CD4-positive, alpha-beta memory T cell (primary cell): ENCODE measurements at regions of chr11 and their contacts with region 1.

Region 1: GRCh38 chr11:122754553-122755322 is 83.6 kb upstream of the CRTAM start:
- DNase-seq: peak in 4 of 5 donors; percentile 42 to 51 (median 44)
- H3K4me3 ChIP-seq: no peak overlapping the region
- H3K4me3 Mint-ChIP-seq: peak overlapping the region in 3 of 8 donors; percentile 30 to 49 (median 35)
- H3K27ac ChIP-seq: no peak overlapping the region
- H3K27ac Mint-ChIP-seq: peak overlapping the region in 5 of 7 donors; percentile 3 to 84 (median 54)
- H3K4me1 ChIP-seq: peaks cover 29% of the 10 kb centered on the region
- H3K4me1 Mint-ChIP-seq: peaks cover 31 to 58% (median 46%) of the 10 kb centered on the region in 4 donors
- H3K27me3 ChIP-seq: no peaks in the 10 kb centered on the region
- H3K27me3 Mint-ChIP-seq: no peaks in the 10 kb centered on the region

Region 2: DNA sequence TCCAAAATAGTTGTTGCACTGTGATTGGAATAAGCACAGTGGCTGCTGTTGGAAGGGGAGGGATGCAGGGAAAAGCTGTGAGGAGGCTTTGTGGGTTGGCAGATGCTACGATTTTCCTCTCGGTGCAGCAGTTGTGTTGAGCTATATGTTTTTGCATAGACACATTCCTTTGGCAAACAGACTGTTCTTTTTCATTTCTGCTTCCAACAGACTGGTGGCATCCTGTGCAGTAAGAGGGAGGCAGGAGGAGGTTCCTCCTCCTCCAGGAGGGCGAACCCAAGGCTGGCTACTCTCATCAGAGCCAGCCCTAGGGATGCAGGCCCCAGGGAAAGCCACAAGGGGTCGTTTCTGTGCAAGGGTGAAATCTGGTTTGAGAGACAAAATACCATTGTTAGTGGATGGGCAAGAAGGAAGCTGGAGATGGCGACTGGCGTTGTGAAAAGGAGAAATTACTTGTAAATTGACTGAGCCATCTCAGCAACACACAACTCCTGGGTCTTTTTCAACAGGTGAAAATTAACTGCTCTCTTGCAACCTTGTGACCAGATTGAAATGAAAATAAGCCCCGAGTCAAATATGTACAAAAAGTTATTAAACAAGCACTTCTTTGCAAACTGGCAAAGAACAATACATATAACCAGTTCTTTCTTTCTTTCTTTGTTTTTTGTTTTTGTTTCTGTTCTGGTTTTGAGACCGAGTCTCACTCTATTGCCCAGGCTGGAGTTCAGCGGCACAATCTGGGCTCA is 125.8 kb before region 1 on chr11:
- CTCF ChIA-PET with region 1: interaction called, 472 read pairs
- POLR2A ChIA-PET with region 1: interaction called, 20 read pairs
- intact Hi-C with region 1: loop called (anchors 1 kb)
- DNase-seq: peak; percentile 60 to 64 (median 62)
- H3K4me3 ChIP-seq: no peak overlapping the region
- H3K4me3 Mint-ChIP-seq: no peak overlapping the region
- H3K27ac ChIP-seq: no peak overlapping the region
- H3K27ac Mint-ChIP-seq: no peak overlapping the region
- H3K4me1 ChIP-seq: peaks cover 8% of the 10 kb centered on the region
- H3K4me1 Mint-ChIP-seq: peaks cover 0 to 10% (median 6%) of the 10 kb centered on the region in 4 donors
- H3K27me3 ChIP-seq: no peaks in the 10 kb centered on the region
- H3K27me3 Mint-ChIP-seq: peaks cover 0 to 1% of the 10 kb centered on the region in 2 donors

Region 3: GRCh38 chr11:122655527-122656072 is 99.1 kb before region 1 on chr11 and contains the start of gene UBASH3B:
- CTCF ChIA-PET with region 1: interaction called, 440 read pairs
- POLR2A ChIA-PET with region 1: interaction called, 121 read pairs
- intact Hi-C with region 1: loop called (anchors 1 kb)
- DNase-seq: peak; percentile 63 to 68 (median 66)
- H3K4me3 ChIP-seq: peak within 1 kb of the TSS; percentile 55 to 86
- H3K4me3 Mint-ChIP-seq: peak within 1 kb of the TSS; percentile 97 to 98 (median 98)
- H3K27ac ChIP-seq: peak within 1 kb of the TSS; percentile 66
- H3K27ac Mint-ChIP-seq: peak within 1 kb of the TSS; percentile 88 to 98 (median 95)
- H3K4me1 ChIP-seq: peaks cover 44% of the 10 kb centered on the region
- H3K4me1 Mint-ChIP-seq: peaks cover 20 to 53% (median 40%) of the 10 kb centered on the region in 4 donors
- H3K27me3 ChIP-seq: no peaks in the 10 kb centered on the region
- H3K27me3 Mint-ChIP-seq: no peaks in the 10 kb centered on the region
- total RNA-seq, gene UBASH3B: 26.6 to 30.9 TPM

Region 4: GRCh38 chr11:122697636-122698167 is 57.0 kb before region 1 on chr11:
- CTCF ChIA-PET with region 1: interaction called, 86 read pairs
- POLR2A ChIA-PET with region 1: interaction called, 131 read pairs
- intact Hi-C with region 1: loop called (anchors 1 kb)
- DNase-seq: peak; percentile 36 to 72 (median 53)
- H3K4me3 ChIP-seq: peak overlapping the region in 1 of 2 donors; percentile 39
- H3K4me3 Mint-ChIP-seq: peak overlapping the region; percentile 42 to 87 (median 76)
- H3K27ac ChIP-seq: peak overlapping the region; percentile 64
- H3K27ac Mint-ChIP-seq: peak overlapping the region; percentile 81 to 96 (median 93)
- H3K4me1 ChIP-seq: peaks cover 89% of the 10 kb centered on the region
- H3K4me1 Mint-ChIP-seq: peaks cover 66 to 93% (median 81%) of the 10 kb centered on the region in 4 donors
- H3K27me3 ChIP-seq: no peaks in the 10 kb centered on the region
- H3K27me3 Mint-ChIP-seq: no peaks in the 10 kb centered on the region

Region 5: DNA sequence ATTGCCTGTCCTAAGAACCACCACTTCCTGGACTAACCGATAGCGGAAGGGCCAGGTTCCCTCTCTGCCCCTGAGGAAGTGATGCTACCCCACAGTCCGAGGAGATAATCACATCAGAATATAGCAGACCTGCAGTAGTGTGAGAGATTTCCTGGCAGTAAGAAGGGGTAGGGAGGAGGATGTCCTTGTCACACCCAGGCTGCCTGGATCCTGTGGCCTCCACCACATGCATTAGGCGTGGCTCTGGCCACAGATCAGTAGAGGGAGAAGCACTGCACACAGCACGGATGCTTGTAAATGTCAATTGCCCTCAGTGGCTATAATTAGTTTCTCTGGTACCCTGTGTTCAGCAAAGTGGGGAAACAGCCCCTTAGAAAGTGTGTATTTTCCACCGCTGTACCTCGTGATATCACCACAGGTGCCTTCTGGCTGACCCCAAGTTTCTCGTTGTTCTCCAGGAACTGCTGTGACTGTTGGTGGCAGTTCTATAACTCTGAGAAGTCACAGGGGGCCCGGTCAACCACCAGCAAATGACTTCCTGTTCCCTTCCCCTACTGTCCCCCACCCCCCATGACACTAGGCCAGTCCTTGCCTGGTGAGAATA is 37.4 kb before region 1 on chr11:
- CTCF ChIA-PET with region 1: interaction called, 32 read pairs
- POLR2A ChIA-PET with region 1: interaction called, 3 read pairs
- intact Hi-C with region 1: loop called (anchors 5 kb)
- DNase-seq: peak in 2 of 5 donors; percentile 8 to 19
- H3K4me3 ChIP-seq: no peak overlapping the region
- H3K4me3 Mint-ChIP-seq: peak overlapping the region in 5 of 8 donors; percentile 11 to 37 (median 24)
- H3K27ac ChIP-seq: no peak overlapping the region
- H3K27ac Mint-ChIP-seq: peak overlapping the region; percentile 74 to 92 (median 85)
- H3K4me1 ChIP-seq: peaks cover 41% of the 10 kb centered on the region
- H3K4me1 Mint-ChIP-seq: peaks cover 39 to 72% (median 57%) of the 10 kb centered on the region in 4 donors
- H3K27me3 ChIP-seq: no peaks in the 10 kb centered on the region
- H3K27me3 Mint-ChIP-seq: no peaks in the 10 kb centered on the region

Region 6: GRCh38 chr11:122743949-122744348 is 10.8 kb before region 1 on chr11:
- CTCF ChIA-PET with region 1: interaction called, 45 read pairs
- POLR2A ChIA-PET with region 1: interaction called, 35 read pairs
- intact Hi-C with region 1: no loop called
- DNase-seq: peak; percentile 73 to 92 (median 78)
- H3K4me3 ChIP-seq: peak overlapping the region in 1 of 2 donors; percentile 41
- H3K4me3 Mint-ChIP-seq: no peak overlapping the region
- H3K27ac ChIP-seq: peak overlapping the region; percentile 59
- H3K27ac Mint-ChIP-seq: no peak overlapping the region
- H3K4me1 ChIP-seq: peaks cover 74% of the 10 kb centered on the region
- H3K4me1 Mint-ChIP-seq: peaks cover 5 to 59% (median 29%) of the 10 kb centered on the region in 4 donors
- H3K27me3 ChIP-seq: no peaks in the 10 kb centered on the region
- H3K27me3 Mint-ChIP-seq: no peaks in the 10 kb centered on the region

Region 7: DNA sequence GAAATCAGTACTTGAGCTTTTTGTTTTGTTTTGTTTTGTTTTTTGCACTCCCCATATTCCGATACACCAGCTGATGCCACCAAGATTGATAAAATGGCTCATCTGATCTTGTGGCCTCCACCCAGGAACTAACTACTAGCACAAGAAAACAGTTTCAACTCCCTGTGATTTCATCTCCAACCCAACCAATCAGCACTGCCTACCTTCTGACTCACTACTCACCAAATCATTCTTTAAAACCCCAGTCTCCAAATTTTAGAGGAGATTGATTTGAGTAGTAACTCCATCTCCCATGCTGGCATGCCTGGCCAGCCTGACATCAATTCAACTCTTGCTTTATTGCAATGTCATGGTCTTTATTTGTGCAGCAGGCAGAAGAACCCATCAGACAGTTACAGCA is 67.5 kb after region 1 on chr11:
- CTCF ChIA-PET with region 1: no interaction called
- POLR2A ChIA-PET with region 1: no interaction called
- intact Hi-C with region 1: no loop called
- DNase-seq: no peak
- H3K4me3 ChIP-seq: no peak overlapping the region
- H3K4me3 Mint-ChIP-seq: no peak overlapping the region
- H3K27ac ChIP-seq: no peak overlapping the region
- H3K27ac Mint-ChIP-seq: no peak overlapping the region
- H3K4me1 ChIP-seq: no peaks in the 10 kb centered on the region
- H3K4me1 Mint-ChIP-seq: no peaks in the 10 kb centered on the region
- H3K27me3 ChIP-seq: no peaks in the 10 kb centered on the region
- H3K27me3 Mint-ChIP-seq: peaks cover 0 to 9% of the 10 kb centered on the region in 2 donors

Region 8: GRCh38 chr11:122853971-122854446 is 99.3 kb after region 1 on chr11:
- CTCF ChIA-PET with region 1: interaction called, 37 read pairs
- POLR2A ChIA-PET with region 1: interaction called, 3 read pairs
- intact Hi-C with region 1: no loop called
- DNase-seq: peak; percentile 50 to 61 (median 55)
- H3K4me3 ChIP-seq: no peak overlapping the region
- H3K4me3 Mint-ChIP-seq: no peak overlapping the region
- H3K27ac ChIP-seq: no peak overlapping the region
- H3K27ac Mint-ChIP-seq: no peak overlapping the region
- H3K4me1 ChIP-seq: peaks cover 25% of the 10 kb centered on the region
- H3K4me1 Mint-ChIP-seq: peaks cover 16 to 28% (median 22%) of the 10 kb centered on the region in 4 donors
- H3K27me3 ChIP-seq: no peaks in the 10 kb centered on the region
- H3K27me3 Mint-ChIP-seq: peaks cover 0 to 2% of the 10 kb centered on the region in 2 donors